Mammary epithelial cell (primary cell): ENCODE measurements at regions of chr14 and their contacts with region 1.

Region 1: DNA sequence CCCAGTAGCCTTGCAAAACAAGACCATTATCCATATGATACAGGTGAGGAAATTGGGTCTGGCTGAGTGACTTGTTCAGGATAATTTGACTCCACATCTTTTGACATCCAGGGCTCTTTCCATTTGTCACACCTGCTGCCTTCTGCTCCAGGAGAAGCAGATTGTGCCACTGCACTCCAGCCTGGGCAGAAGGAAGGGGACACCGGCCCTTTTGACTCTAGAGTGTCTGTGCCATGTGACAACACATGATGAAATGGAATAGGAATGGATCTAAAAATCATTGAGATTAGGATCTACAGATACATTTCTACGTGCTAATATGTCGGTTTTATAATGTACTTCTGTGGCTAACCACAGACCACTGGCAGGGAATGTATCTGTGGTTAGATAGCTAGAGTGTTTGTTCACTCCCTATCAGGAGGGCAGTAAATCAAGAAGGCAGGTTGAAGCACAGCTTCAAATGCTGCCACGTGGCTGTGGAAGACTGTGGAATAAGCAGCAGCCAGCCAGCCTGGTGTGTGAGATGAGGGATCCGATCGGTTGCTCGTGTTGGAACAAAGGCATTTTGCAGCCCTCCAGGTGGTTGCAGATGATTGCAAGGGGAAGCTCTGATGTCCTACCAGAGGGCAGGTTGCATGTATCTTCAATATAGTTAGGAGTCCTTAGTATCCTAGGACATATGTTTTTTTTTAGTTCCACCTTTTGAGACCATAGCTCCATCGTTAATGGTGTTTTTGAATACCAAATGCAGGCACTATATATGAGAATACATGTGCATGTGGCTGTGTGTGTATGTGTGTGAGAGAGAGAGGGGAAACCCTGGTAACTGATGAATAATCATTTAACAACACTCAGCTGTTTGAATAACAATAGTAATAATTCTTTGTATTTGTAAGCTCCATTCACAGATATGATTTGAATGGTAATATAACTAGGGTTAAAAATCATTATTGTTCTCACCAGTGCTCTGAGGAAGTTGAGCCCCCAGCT is 28.6 kb downstream of the EML1 start:
- DNase-seq: peak; percentile 80
- H3K4me3 ChIP-seq: no peak overlapping the region
- H3K27ac ChIP-seq: no peak overlapping the region
- H3K4me1 ChIP-seq: no peaks in the 10 kb centered on the region
- H3K27me3 ChIP-seq: peaks cover 16% of the 10 kb centered on the region
- CTCF ChIP-seq: no peak

Region 2: GRCh38 chr14:99724196-99724891 is 97.5 kb before region 1 on chr14:
- CTCF ChIA-PET with region 1: no interaction called
- dilution Hi-C with region 1: loop called (anchors 5 kb)
- in situ Hi-C with region 1: no loop called
- intact Hi-C with region 1: no loop called
- DNase-seq: no peak
- H3K4me3 ChIP-seq: no peak overlapping the region
- H3K27ac ChIP-seq: no peak overlapping the region
- H3K4me1 ChIP-seq: no peaks in the 10 kb centered on the region
- H3K27me3 ChIP-seq: no peaks in the 10 kb centered on the region
- CTCF ChIP-seq: no peak

Region 3: GRCh38 chr14:99774556-99775307 is 47.1 kb before region 1 on chr14:
- CTCF ChIA-PET with region 1: no interaction called
- dilution Hi-C with region 1: loop called (anchors 5 kb)
- in situ Hi-C with region 1: no loop called
- intact Hi-C with region 1: no loop called
- DNase-seq: no peak
- H3K4me3 ChIP-seq: no peak overlapping the region
- H3K27ac ChIP-seq: no peak overlapping the region
- H3K4me1 ChIP-seq: no peaks in the 10 kb centered on the region
- H3K27me3 ChIP-seq: no peaks in the 10 kb centered on the region
- CTCF ChIP-seq: no peak

Region 4: GRCh38 chr14:99918781-99919180 is 97.0 kb after region 1 on chr14:
- CTCF ChIA-PET with region 1: no interaction called
- dilution Hi-C with region 1: loop called (anchors 5 kb)
- in situ Hi-C with region 1: no loop called
- intact Hi-C with region 1: no loop called
- DNase-seq: no peak
- H3K4me3 ChIP-seq: no peak overlapping the region
- H3K27ac ChIP-seq: no peak overlapping the region
- H3K4me1 ChIP-seq: no peaks in the 10 kb centered on the region
- H3K27me3 ChIP-seq: peaks cover 3% of the 10 kb centered on the region
- CTCF ChIP-seq: no peak